Activated CD8-positive, alpha-beta memory T cell treated with anti-CD3 and anti-CD28 coated beads, Interleukin-2, amount 10 ng/mL, durations not matched to agents 7 days and 5 days (primary cell): ENCODE measurements at regions of chr11 and their contacts with region 1.

Region 1: DNA sequence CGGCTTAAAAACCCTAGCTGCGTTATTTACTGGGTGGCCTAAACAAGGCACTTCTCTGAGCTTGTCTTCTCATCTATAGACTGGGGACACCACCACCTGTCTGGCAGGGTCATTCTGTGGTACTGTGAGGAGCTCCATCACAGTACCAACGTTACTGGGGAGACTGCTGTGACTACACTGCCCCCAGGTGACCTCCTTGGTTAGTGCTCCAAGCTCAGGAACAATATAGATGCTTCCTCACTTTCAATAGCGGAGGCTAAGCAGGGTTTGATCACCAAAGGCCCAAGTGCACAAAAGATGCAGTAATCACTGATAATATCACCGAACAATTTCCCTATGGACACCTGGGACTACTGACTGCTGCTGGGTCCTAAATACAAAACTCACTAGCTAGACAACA is 18.8 kb downstream of the PRPF19 start:
- DNase-seq: peak; percentile 75
- ATAC-seq: peak; percentile 98
- H3K4me3 Mint-ChIP-seq: no peak overlapping the region
- H3K27ac Mint-ChIP-seq: no peak overlapping the region
- H3K4me1 Mint-ChIP-seq: peaks cover 3% of the 10 kb centered on the region
- H3K27me3 Mint-ChIP-seq: no peaks in the 10 kb centered on the region

Region 2: GRCh38 chr11:60821827-60822599 is 65.5 kb before region 1 on chr11:
- CTCF ChIA-PET with region 1: interaction called, 426 read pairs
- DNase-seq: no peak
- ATAC-seq: no peak
- H3K4me3 Mint-ChIP-seq: no peak overlapping the region
- H3K27ac Mint-ChIP-seq: no peak overlapping the region
- H3K4me1 Mint-ChIP-seq: no peaks in the 10 kb centered on the region
- H3K27me3 Mint-ChIP-seq: peaks cover 19% of the 10 kb centered on the region

Region 3: GRCh38 chr11:60841797-60842667 is 45.5 kb before region 1 on chr11 and contains the start of gene CCDC86:
- CTCF ChIA-PET with region 1: interaction called, 426 read pairs
- DNase-seq: peak; percentile 98
- ATAC-seq: peak; percentile 91
- H3K4me3 Mint-ChIP-seq: peak within 1 kb of the TSS; percentile 84
- H3K27ac Mint-ChIP-seq: peak within 1 kb of the TSS; percentile 84
- H3K4me1 Mint-ChIP-seq: peaks cover 41% of the 10 kb centered on the region
- H3K27me3 Mint-ChIP-seq: no peaks in the 10 kb centered on the region
- total RNA-seq, gene CCDC86: 26.5 to 40.8 TPM

Region 4: GRCh38 chr11:60855726-60856633 is 31.6 kb before region 1 on chr11 and contains the start of gene PTGDR2:
- CTCF ChIA-PET with region 1: interaction called, 10 read pairs
- DNase-seq: no peak
- ATAC-seq: no peak
- H3K4me3 Mint-ChIP-seq: peak within 1 kb of the TSS; percentile 58
- H3K27ac Mint-ChIP-seq: peak within 1 kb of the TSS; percentile 64
- H3K4me1 Mint-ChIP-seq: peaks cover 36% of the 10 kb centered on the region
- H3K27me3 Mint-ChIP-seq: peaks cover 5% of the 10 kb centered on the region
- total RNA-seq, gene PTGDR2: 1.1 to 3.7 TPM

Region 5: GRCh38 chr11:60872961-60873524 is 14.5 kb before region 1 on chr11:
- CTCF ChIA-PET with region 1: interaction called, 39 read pairs
- DNase-seq: no peak
- ATAC-seq: no peak
- H3K4me3 Mint-ChIP-seq: no peak overlapping the region
- H3K27ac Mint-ChIP-seq: no peak overlapping the region
- H3K4me1 Mint-ChIP-seq: peaks cover 62% of the 10 kb centered on the region
- H3K27me3 Mint-ChIP-seq: no peaks in the 10 kb centered on the region

Region 6: GRCh38 chr11:60906132-60906972 is 18.8 kb after region 1 on chr11 and contains the start of gene PRPF19:
- CTCF ChIA-PET with region 1: interaction called, 27 read pairs
- DNase-seq: peak; percentile 99
- ATAC-seq: peak; percentile 96
- H3K4me3 Mint-ChIP-seq: peak within 1 kb of the TSS; percentile 78
- H3K27ac Mint-ChIP-seq: peak within 1 kb of the TSS; percentile 92
- H3K4me1 Mint-ChIP-seq: peaks cover 35% of the 10 kb centered on the region
- H3K27me3 Mint-ChIP-seq: peaks cover 14% of the 10 kb centered on the region
- total RNA-seq, gene PRPF19: 125 to 144 TPM

Region 7: GRCh38 chr11:60964801-60965200 is 77.2 kb after region 1 on chr11:
- CTCF ChIA-PET with region 1: no interaction called
- DNase-seq: no peak
- ATAC-seq: no peak
- H3K4me3 Mint-ChIP-seq: no peak overlapping the region
- H3K27ac Mint-ChIP-seq: no peak overlapping the region
- H3K4me1 Mint-ChIP-seq: peaks cover 3% of the 10 kb centered on the region
- H3K27me3 Mint-ChIP-seq: peaks cover 28% of the 10 kb centered on the region